ENCODE measurements at regions of chr20 and their contacts with region 1.

Region 1: GRCh38 chr20:5056801-5057599 is 55.7 kb upstream of the SLC23A2 start:
- DNase-seq: peak; percentile 86
- H3K4me3 Mint-ChIP-seq: peak overlapping the region; percentile 9
- H3K27ac Mint-ChIP-seq: peak overlapping the region; percentile 90
- H3K4me1 Mint-ChIP-seq: peaks cover 33% of the 10 kb centered on the region
- H3K27me3 Mint-ChIP-seq: no peaks in the 10 kb centered on the region

Region 2: DNA sequence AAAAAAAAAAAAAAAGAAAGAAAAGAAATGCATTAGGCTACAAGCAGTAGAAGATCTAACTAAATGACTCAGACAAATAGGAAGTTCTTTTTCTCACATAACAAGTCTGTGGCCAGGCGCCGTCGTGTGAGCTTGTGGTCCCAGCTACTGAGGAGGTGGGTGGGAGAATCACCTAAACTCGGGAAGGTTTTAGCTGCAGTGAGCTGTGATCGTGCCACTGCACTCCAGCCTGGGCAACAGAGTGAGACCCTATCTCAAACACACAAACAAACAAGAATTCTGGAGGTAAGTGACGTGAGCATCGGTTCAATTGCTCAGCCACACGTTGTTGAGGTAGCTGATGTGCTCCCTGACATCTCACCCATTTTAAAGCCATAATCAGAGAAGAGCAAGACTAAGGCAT is 17.7 kb before region 1 on chr20:
- CTCF ChIA-PET with region 1: interaction called, 15 read pairs
- POLR2A ChIA-PET with region 1: no interaction called
- DNase-seq: no peak
- H3K4me3 Mint-ChIP-seq: no peak overlapping the region
- H3K27ac Mint-ChIP-seq: no peak overlapping the region
- H3K4me1 Mint-ChIP-seq: peaks cover 7% of the 10 kb centered on the region
- H3K27me3 Mint-ChIP-seq: no peaks in the 10 kb centered on the region

Region 3: DNA sequence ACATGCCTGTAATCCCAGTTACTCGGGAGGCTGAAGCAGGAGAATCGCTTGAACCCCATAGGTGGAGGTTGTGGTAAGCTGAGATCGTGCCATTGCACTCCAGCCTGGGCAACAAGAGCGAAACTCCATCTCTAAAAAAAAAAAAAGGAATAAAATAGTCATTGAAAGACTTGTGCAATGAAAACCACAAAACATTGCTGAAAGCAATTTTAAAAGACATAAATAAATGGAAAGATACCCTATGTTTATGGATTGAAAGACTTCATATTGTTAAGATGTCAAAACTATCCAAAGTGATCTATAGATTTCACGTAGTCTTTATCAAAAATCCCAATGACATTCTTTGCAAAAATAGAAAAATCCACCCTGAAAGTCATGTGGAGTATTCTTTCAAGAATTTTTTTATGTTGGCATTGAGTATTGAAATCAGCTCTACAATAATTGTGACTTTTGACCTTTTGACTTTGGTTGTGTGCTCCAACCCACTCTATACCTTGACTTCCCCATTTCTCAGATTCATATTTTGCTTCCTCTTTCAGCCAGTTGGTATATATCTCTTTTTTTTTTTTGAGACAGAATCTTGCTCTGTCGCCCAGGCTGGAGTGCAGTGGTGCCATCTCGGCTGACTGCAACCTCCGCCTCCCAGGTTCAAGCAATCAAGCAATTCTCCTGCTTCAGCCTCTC is 10.2 kb before region 1 on chr20:
- CTCF ChIA-PET with region 1: interaction called, 13 read pairs
- POLR2A ChIA-PET with region 1: no interaction called
- DNase-seq: no peak
- H3K4me3 Mint-ChIP-seq: no peak overlapping the region
- H3K27ac Mint-ChIP-seq: no peak overlapping the region
- H3K4me1 Mint-ChIP-seq: no peaks in the 10 kb centered on the region
- H3K27me3 Mint-ChIP-seq: peaks cover 19% of the 10 kb centered on the region

Region 4: DNA sequence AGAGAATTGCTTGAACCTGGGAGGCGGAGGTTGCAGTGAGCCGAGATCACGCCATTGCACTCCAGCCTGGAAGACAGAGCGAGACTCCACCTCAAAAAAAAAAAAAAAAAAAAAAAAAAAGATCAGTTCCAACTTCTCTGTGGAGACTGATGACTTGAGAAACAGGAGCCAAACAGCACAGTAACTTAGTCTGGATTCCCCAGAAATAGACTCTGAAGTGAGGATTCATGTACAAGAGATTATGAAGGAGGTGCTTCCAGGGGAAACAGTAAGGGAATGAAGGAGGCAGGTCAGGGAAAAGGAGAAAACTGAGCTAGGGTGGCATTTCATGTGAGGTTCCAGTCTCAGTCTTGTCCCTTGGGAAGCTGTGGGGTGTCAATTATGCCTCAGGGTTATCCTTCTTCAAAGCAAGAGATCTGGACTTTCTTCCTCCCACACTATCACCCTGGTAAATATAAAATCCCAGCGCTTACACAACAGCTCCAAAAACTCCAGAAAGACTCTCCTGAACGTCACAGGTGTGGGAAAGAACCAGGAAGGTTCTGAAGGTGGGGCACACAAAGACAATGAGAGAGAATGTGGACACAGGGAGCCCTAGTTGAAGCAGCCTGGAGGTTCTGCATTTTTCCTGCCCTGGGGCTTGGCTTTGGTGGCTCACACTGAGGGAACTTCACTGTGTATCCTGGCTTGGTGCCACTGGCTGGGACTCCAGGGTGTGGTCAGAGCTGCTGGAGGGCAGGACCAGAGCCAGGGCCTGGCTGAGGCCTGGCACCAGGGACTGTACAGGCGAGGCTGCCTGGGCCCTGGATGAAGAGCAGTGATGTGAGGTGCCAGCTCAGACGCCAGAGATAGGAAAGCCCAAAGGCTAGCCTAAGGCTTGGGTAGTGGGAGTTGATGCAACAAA is 16.0 kb after region 1 on chr20:
- CTCF ChIA-PET with region 1: interaction called, 11 read pairs
- POLR2A ChIA-PET with region 1: interaction called, 4 read pairs
- DNase-seq: no peak
- H3K4me3 Mint-ChIP-seq: no peak overlapping the region
- H3K27ac Mint-ChIP-seq: peak overlapping the region; percentile 52
- H3K4me1 Mint-ChIP-seq: peaks cover 38% of the 10 kb centered on the region
- H3K27me3 Mint-ChIP-seq: no peaks in the 10 kb centered on the region

Region 5: GRCh38 chr20:5100684-5101347 is 43.8 kb after region 1 on chr20:
- CTCF ChIA-PET with region 1: interaction called, 36 read pairs
- POLR2A ChIA-PET with region 1: interaction called, 3 read pairs
- DNase-seq: peak; percentile 78
- H3K4me3 Mint-ChIP-seq: no peak overlapping the region
- H3K27ac Mint-ChIP-seq: peak overlapping the region; percentile 59
- H3K4me1 Mint-ChIP-seq: peaks cover 18% of the 10 kb centered on the region
- H3K27me3 Mint-ChIP-seq: no peaks in the 10 kb centered on the region

Region 6: GRCh38 chr20:5168651-5169396 is 111.8 kb after region 1 on chr20:
- CTCF ChIA-PET with region 1: no interaction called
- POLR2A ChIA-PET with region 1: no interaction called
- DNase-seq: no peak
- H3K4me3 Mint-ChIP-seq: no peak overlapping the region
- H3K27ac Mint-ChIP-seq: peak overlapping the region; percentile 81
- H3K4me1 Mint-ChIP-seq: peaks cover 32% of the 10 kb centered on the region
- H3K27me3 Mint-ChIP-seq: no peaks in the 10 kb centered on the region

Measured in activated CD4-positive, alpha-beta T cell treated with anti-CD3 and anti-CD28 coated beads, Interleukin-2, amount 10 ng/mL, durations not matched to agents 7 days and 5 days (primary cell).